ENCODE measurements at regions of chr4 and their contacts with region 1.

Region 1: DNA sequence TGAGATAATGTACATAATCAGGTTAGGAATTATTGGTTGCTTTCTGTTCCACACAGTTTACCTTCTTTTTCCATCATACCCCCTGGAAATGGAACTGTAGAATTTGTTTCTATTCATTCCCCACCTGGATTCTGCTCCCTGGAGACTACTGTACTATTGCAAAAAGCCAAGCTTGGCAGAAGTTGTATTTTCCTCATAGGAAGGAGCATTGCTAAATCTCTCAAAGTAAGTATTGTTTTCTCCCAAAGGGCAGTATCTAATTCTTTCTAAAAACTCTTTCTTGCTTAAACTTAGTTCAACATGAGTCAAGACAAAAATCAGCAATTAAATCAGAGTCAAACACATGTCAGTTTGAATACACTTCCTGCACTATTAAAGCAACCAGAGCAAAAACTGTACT is 136.2 kb downstream of the CDS1 start:
- DNase-seq: no peak
- H3K4me3 ChIP-seq: no peak overlapping the region
- CTCF ChIP-seq: no peak

Region 2: DNA sequence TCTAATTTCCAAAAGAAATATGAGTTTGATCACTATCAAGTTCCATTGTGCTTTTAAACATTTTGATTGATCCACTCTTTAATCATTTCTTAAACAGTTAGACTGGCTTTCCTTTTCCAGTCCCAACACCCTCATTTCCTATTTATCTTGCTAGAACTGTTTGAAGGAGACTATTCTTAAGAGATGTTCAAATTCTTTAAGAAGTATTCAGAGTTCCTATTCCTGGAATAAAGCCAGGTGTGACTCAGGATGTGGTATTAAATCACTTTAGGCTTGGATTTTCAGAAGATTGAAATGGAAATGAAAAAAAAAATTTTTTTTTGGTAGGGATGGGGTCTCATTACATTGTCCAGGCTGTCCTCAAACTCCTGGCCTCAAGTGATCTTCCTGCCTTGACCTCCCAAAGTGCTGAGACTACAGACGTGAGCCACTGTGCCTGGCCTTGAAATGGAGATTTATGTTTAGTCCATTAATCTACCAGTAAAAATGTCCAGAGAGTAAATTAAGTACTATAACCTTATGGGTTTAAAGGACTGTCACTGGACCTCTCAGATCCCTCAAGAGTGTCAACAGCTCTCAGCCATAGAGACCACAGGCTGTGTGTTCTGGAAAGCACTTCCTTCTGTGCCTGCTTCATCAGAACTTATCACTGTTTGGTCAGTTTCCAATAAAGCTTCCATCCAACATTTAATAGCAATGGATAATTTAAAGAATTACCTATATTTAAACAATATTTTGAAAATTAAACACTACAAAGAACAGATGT is 45.5 kb before region 1 on chr4:
- in situ Hi-C with region 1: no loop called
- DNase-seq: peak; percentile 89
- H3K4me3 ChIP-seq: no peak overlapping the region
- CTCF ChIP-seq: no peak

Region 3: DNA sequence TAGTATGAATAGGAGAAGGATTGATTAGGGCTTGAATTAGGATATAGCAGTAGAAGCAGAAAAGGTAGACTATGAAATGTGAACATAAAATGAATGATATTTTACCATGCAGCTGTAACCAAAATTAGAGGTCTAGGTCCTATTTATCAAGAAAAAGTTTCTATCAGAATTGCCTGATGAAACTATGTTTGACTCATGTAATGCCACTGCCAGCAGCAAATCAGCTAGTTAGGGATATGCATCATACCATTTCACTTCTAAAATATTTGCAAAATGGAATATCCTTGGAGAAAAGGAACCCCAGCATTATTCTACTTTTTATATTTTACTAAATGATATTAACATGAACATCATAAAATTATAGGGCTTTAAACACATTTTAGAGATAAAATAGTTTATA is 58.9 kb after region 1 on chr4:
- in situ Hi-C with region 1: loop called (anchors 5 kb)
- DNase-seq: no peak
- H3K4me3 ChIP-seq: no peak overlapping the region
- CTCF ChIP-seq: no peak

Region 4: DNA sequence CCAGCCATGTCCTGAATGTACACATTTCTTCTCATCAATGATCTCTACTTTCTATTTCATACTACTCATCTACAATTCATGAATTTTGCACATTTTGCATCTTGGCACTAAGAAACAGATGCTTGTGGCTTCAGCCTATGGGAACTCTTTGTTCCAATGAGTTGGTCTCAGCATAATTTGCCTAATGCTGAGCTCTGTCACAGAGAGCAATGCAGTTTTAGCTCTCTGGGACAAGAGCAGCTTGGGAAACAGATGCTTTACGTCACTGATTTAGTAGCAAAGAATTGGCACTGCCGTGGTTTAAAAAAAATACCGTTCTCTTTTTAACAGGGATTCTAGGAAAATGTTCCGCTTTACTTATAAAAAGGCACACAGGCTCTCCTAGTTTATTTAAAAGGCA is 85.0 kb after region 1 on chr4:
- in situ Hi-C with region 1: no loop called
- DNase-seq: peak; percentile 50
- H3K4me3 ChIP-seq: no peak overlapping the region
- CTCF ChIP-seq: no peak

Measured in astrocyte of the cerebellum (primary cell).